ENCODE measurements at regions of chr2 and their contacts with region 1.

Region 1: GRCh38 chr2:218852911-218853667 is 6.5 kb upstream of the WNT6 start:
- DNase-seq: peak; percentile 52
- ATAC-seq: peak; percentile 78
- H3K4me3 ChIP-seq: no peak overlapping the region
- H3K27ac ChIP-seq: no peak overlapping the region
- H3K4me1 ChIP-seq: no peaks in the 10 kb centered on the region
- H3K27me3 ChIP-seq: peaks cover 57% of the 10 kb centered on the region
- CTCF ChIP-seq: peak; percentile 72
- POLR2A ChIP-seq: no peak
- RAD21 ChIP-seq: peak; percentile 75

Region 2: DNA sequence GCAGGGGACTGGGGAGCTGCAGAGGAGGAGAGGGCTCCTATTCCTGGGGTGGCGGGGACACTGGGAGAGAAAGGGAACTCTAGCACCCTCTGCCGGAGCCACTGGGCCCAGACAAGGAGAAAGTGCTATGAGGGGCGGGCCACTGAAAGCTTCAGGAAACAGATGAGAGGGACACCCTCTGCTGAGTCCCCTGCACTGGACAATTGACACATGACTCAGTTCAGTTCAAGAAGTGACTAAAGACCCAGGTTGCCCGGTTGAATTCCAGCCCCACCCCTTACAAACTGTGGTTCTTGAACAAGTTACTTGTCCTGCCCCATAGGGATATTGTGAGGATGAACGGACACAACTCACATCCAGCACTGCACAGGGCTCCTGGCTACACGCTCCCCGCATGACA is 779.1 kb before region 1 on chr2:
- CTCF ChIA-PET with region 1: no interaction called
- POLR2A ChIA-PET with region 1: no interaction called
- dilution Hi-C with region 1: no loop called
- in situ Hi-C with region 1: no loop called
- intact Hi-C with region 1: no loop called
- DNase-seq: peak; percentile 7
- ATAC-seq: peak; percentile 82
- H3K4me3 ChIP-seq: no peak overlapping the region
- H3K27ac ChIP-seq: no peak overlapping the region
- H3K4me1 ChIP-seq: no peaks in the 10 kb centered on the region
- H3K27me3 ChIP-seq: peaks cover 62% of the 10 kb centered on the region
- CTCF ChIP-seq: peak; percentile 47
- POLR2A ChIP-seq: no peak
- RAD21 ChIP-seq: peak; percentile 16; the same call in 1 of the 2 replicates

Region 3: DNA sequence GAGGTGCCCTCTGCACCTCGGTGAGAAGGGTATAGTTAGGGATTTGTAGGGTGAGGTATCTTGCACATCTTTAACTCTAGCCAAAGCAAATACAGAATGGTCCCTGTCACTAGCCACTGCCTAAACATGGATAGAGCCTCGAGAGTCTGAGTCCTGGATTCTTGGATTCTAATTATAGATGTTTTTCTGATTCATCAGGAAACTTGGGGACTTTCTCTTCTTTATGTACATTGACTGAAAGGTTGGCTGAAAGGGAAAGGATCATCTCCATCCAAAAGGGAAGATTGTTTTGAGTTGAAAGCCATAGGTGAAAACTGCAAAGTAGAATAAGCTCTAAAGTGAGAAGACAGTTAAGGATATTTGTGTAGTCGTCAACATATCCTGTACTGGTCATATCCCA is 173.0 kb before region 1 on chr2:
- CTCF ChIA-PET with region 1: interaction called, 3 read pairs
- POLR2A ChIA-PET with region 1: no interaction called
- dilution Hi-C with region 1: no loop called
- in situ Hi-C with region 1: loop called (anchors 10 kb)
- intact Hi-C with region 1: no loop called
- DNase-seq: no peak
- ATAC-seq: no peak
- H3K4me3 ChIP-seq: no peak overlapping the region
- H3K27ac ChIP-seq: no peak overlapping the region
- H3K4me1 ChIP-seq: no peaks in the 10 kb centered on the region
- H3K27me3 ChIP-seq: no peaks in the 10 kb centered on the region
- CTCF ChIP-seq: no peak
- POLR2A ChIP-seq: no peak
- RAD21 ChIP-seq: no peak

Region 4: DNA sequence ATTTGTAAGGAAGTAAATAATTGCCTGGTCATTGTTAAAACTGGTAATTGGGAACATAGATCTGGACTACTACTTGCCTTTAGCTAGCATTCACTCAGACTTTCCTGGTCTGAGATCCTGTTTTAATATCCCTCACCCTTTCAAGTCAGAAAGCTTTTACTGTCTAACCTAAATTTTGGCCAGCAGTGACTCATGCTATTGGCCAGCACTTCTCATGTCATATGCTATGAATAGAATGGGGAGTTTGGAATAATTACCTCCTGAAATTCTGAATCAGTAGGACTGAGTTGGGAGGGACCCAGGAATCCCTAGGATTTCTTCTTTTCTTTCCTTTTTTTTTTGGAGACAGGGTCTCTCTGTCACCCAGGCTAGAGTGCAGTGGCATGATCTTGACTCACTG is 161.9 kb before region 1 on chr2:
- CTCF ChIA-PET with region 1: interaction called, 18 read pairs
- POLR2A ChIA-PET with region 1: no interaction called
- dilution Hi-C with region 1: no loop called
- in situ Hi-C with region 1: loop called (anchors 10 kb)
- intact Hi-C with region 1: no loop called
- DNase-seq: peak; percentile 66
- ATAC-seq: peak; percentile 50; the same call in 1 of the 2 replicates
- H3K4me3 ChIP-seq: no peak overlapping the region
- H3K27ac ChIP-seq: no peak overlapping the region
- H3K4me1 ChIP-seq: peaks cover 3% of the 10 kb centered on the region; the same call in 1 of the 2 replicates
- H3K27me3 ChIP-seq: no peaks in the 10 kb centered on the region
- CTCF ChIP-seq: no peak
- POLR2A ChIP-seq: no peak
- RAD21 ChIP-seq: no peak